Breast epithelium (tissue), 4 donors: ENCODE measurements at regions of chr9 and their contacts with region 1.

Region 1: GRCh38 chr9:35835216-35835632 is 6.2 kb downstream of the TMEM8B start:
- DNase-seq: no peak
- H3K4me3 ChIP-seq: no peak overlapping the region
- H3K27ac ChIP-seq: peak overlapping the region; percentile 85 to 93
- H3K4me1 ChIP-seq: peaks cover 4 to 16% of the 10 kb centered on the region in 2 donors
- H3K27me3 ChIP-seq: no peaks in the 10 kb centered on the region
- CTCF ChIP-seq: peak in 1 of 3 donors; percentile 17
- POLR2A ChIP-seq: no peak

Region 2: GRCh38 chr9:35657546-35658136 is 177.6 kb before region 1 on chr9 and contains the start of gene RMRP:
- intact Hi-C with region 1: loop called (anchors 5 kb)
- DNase-seq: peak; percentile 94 to 98
- H3K4me3 ChIP-seq: peak within 1 kb of the TSS; percentile 89 to 96 (median 92)
- H3K27ac ChIP-seq: peak within 1 kb of the TSS; percentile 98
- H3K4me1 ChIP-seq: no peaks in the 10 kb centered on the region
- H3K27me3 ChIP-seq: no peaks in the 10 kb centered on the region
- CTCF ChIP-seq: peak; percentile 46 to 65 (median 56)
- POLR2A ChIP-seq: peak; percentile 36
- total RNA-seq, gene RMRP: 1,664 to 2,064 (median 2,058) TPM

Region 3: DNA sequence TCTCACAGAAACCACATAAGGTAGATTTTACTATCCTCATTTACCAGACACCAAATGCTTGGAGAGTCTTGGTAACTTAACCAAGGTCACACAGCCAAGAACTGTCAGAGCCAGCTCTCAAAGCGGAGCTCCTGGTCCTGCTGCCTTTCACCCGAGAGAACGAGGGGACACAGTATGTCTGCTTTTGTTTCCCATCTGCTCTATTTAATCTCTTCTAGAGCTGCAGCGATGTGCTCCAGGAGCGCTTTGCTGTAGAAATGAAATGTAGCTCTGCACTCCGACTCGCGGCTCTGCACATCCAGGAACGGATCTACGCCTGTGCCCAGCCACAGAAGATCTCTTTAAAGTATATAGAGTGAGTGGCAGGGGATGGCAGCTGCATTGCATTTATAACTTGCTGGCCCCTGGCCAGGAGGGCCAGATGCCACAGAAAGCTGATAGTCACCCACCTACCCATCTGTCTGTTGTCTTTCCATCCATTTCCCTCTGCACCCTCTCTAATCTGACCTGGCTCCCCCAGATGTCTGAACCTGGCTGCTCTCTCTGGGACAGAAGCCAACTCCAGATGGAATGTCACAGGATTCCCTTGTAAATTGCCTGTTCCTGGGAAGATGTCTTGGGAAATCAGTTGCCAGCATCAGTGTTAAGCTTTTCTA is 1897.0 kb after region 1 on chr9:
- intact Hi-C with region 1: loop called (anchors 10 kb)
- DNase-seq: no peak
- H3K4me3 ChIP-seq: no peak overlapping the region
- H3K27ac ChIP-seq: no peak overlapping the region
- H3K4me1 ChIP-seq: no peaks in the 10 kb centered on the region
- H3K27me3 ChIP-seq: peaks cover 0 to 6% of the 10 kb centered on the region in 2 donors
- CTCF ChIP-seq: no peak
- POLR2A ChIP-seq: no peak